ENCODE measurements at regions of chr4 and their contacts with region 1.

Region 1: DNA sequence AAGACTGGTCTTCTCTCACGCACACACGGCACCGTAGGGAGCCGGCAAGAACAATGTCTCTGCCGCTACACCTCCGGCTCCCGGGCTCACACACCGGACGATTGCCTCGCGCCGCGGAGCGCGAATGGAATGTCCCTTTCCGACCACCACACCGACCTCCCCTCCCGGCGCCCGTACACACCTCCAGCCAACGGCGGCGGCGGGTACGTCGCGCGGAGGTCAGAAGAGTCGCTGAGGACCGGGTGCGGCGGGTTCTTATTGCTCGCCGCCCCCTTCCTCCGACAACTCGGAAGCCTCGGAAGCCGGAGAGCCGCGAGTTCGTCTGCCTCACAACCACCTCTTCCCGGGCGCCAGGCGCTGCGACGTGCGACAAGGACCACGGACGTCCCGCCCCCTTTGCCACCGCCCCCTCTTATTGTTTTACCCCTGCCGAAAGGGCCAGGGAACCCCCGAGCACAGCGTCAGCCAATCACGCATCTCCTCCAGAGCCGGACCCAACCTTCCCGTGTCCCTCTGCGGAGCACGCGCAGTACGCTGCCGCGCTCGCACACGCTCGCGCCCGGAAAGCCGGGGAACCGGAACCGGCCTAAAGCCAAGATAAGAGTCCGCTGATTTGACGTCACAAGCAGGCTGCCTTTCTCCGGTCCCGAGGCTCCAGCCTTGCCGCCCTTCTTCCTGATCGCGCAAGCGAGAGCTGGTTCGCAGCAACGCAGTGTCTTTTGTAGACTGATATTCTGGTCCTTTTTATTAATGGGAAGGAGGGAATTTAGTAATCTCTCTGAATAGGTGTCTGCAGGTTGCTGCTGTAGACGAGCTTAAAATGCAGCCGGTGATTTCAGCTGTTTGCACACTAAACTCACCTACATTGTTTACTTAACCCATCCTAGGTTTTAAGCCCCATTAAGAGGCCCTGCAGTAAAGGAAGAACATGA is at the start of gene G3BP2:
- DNase-seq: peak; percentile 98 to 99
- ATAC-seq: peak; percentile 92 to 94
- H3K4me3 ChIP-seq: peak within 1 kb of the TSS; percentile 80 to 98 (median 95)
- H3K27ac ChIP-seq: peak within 1 kb of the TSS; percentile 96 to 99 (median 98)
- H3K4me1 ChIP-seq: peaks cover 42 to 43% of the 10 kb centered on the region in 2 donors
- H3K27me3 ChIP-seq: no peaks in the 10 kb centered on the region
- CTCF ChIP-seq: peak in 1 of 5 experiments; percentile 31
- POLR2A ChIP-seq: peak; percentile 97
- total RNA-seq, gene G3BP2: 123 to 226 (median 132) TPM

Region 2: GRCh38 chr4:75698963-75699228 is 25.6 kb after region 1 on chr4:
- in situ Hi-C with region 1: no loop called
- intact Hi-C with region 1: loop called (anchors 2 kb)
- DNase-seq: no peak
- ATAC-seq: no peak
- H3K4me3 ChIP-seq: no peak overlapping the region
- H3K27ac ChIP-seq: peak overlapping the region; percentile 84 to 91 (median 88)
- H3K4me1 ChIP-seq: peaks cover 8 to 12% of the 10 kb centered on the region in 2 donors
- H3K27me3 ChIP-seq: no peaks in the 10 kb centered on the region
- CTCF ChIP-seq: no peak
- POLR2A ChIP-seq: no peak

Region 3: GRCh38 chr4:75769036-75769435 is 95.7 kb after region 1 on chr4:
- in situ Hi-C with region 1: loop called in 1 of 4 experiments (anchors 25 kb)
- intact Hi-C with region 1: no loop called
- DNase-seq: no peak
- ATAC-seq: peak in 1 of 2 donors; percentile 36
- H3K4me3 ChIP-seq: no peak overlapping the region
- H3K27ac ChIP-seq: peak overlapping the region in 2 of 4 donors; percentile 2 to 40
- H3K4me1 ChIP-seq: peaks cover 4 to 10% of the 10 kb centered on the region in 2 donors
- H3K27me3 ChIP-seq: no peaks in the 10 kb centered on the region
- CTCF ChIP-seq: no peak
- POLR2A ChIP-seq: no peak

Region 4: DNA sequence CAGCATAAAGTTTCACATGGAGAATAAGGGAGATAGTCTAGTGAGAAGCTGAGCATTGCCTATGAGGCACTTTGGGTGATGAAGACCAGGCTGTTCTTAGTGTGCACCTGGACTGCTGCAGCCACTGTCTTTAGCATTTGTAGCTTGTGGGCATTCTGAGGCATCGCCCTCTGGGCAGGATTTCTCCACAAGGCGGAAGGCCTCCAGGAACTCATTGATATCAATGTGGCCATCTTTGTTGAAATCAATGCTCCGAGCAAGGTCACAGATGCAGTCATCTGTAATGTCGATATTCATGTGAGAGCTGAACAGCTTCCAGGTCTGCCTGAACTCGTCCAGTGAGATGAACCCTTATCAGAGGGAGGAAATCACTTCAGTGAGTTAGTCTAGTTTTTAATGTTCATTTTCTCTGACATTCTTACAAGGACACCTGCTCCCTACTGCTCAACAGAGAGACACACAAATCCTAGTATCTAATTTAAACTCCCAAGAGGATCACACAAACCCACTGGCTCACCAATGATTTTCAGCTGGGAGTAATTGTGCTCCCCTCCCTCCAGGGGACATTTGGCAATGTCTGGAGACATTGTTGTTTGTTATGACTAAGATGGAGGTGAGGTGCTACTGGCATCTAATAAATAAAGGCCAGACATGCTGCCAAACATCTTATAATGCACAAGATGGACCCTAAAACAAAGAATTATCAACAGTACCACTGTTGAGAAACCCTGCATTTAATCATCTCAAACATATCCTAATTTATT is 187.5 kb after region 1 on chr4:
- in situ Hi-C with region 1: no loop called
- intact Hi-C with region 1: no loop called
- DNase-seq: no peak
- ATAC-seq: no peak
- H3K4me3 ChIP-seq: no peak overlapping the region
- H3K27ac ChIP-seq: no peak overlapping the region
- H3K4me1 ChIP-seq: no peaks in the 10 kb centered on the region
- H3K27me3 ChIP-seq: no peaks in the 10 kb centered on the region
- CTCF ChIP-seq: no peak
- POLR2A ChIP-seq: no peak